HEK293 (cell line): ENCODE measurements at regions of chr2 and their contacts with region 1.

Region 1: GRCh38 chr2:121530212-121530705 is 421 bp upstream of the RNU4ATAC start:
- H3K4me3 ChIP-seq: peak overlapping the region; percentile 78
- H3K27ac ChIP-seq: peak overlapping the region; percentile 100
- H3K4me1 ChIP-seq: peaks cover 17% of the 10 kb centered on the region
- CTCF ChIP-seq: no peak

Region 2: GRCh38 chr2:121400201-121400600 is 130.1 kb before region 1 on chr2:
- CTCF ChIA-PET with region 1: interaction called, 13 read pairs
- POLR2A ChIA-PET with region 1: interaction called, 13 read pairs
- H3K4me3 ChIP-seq: no peak overlapping the region
- H3K27ac ChIP-seq: no peak overlapping the region
- H3K4me1 ChIP-seq: no peaks in the 10 kb centered on the region
- CTCF ChIP-seq: no peak

Region 3: GRCh38 chr2:121454549-121455090 is 75.6 kb before region 1 on chr2:
- CTCF ChIA-PET with region 1: no interaction called
- POLR2A ChIA-PET with region 1: no interaction called
- H3K4me3 ChIP-seq: no peak overlapping the region
- H3K27ac ChIP-seq: no peak overlapping the region
- H3K4me1 ChIP-seq: no peaks in the 10 kb centered on the region
- CTCF ChIP-seq: no peak

Region 4: DNA sequence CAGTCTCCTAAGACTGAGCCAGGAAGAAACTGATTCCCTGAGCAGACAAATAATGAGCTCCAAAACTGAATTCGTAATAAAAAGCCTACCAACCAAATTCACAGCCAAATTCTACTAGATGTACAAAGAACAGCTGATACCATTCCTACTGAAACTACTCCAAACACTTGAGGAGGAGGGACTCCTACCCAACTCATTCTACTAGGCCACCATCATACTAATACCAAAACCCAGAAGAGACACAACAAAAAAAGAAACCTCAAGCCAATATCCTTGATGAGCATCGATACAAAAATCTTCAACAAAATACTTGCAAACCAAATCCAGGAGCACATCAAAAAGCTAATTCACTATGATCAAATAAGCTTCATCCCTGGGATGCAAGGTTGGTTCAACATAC is 20.4 kb after region 1 on chr2:
- CTCF ChIA-PET with region 1: no interaction called
- POLR2A ChIA-PET with region 1: no interaction called
- H3K4me3 ChIP-seq: no peak overlapping the region
- H3K27ac ChIP-seq: no peak overlapping the region
- H3K4me1 ChIP-seq: no peaks in the 10 kb centered on the region
- CTCF ChIP-seq: no peak

Region 5: DNA sequence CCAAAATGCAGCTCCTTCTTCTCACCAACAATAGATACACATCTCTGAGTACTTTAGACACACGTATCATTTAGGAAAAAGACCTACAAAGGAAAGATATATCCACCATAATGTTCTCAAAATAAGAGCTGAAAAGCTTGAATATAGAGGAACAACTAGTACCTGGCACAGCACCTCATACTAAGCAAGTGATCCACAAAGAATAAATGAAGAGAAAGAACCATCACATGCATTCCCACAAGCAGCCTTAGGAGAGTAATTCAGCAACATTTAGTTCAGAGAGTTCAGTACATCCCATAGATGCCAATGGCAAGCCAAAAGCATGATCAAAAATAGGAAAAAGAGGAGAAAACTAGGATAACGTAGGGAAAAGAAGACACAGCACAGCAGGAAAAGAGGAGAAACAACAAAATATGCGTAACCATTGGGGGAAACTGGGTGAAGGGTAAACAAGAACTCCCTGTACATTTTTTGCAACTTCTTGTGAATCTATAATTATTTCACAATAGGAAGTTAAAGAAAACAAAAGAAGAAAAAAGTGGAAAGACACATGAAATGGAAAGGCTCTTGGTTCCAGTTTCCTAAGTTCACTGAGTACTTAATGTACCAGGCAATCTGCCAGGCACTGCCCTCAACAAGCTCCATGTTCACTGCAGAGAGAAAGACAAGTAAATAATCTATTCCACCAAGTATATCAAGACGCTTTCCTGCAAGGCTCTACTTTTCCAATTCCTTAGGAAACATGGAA is 96.7 kb after region 1 on chr2:
- CTCF ChIA-PET with region 1: no interaction called
- POLR2A ChIA-PET with region 1: no interaction called
- H3K4me3 ChIP-seq: no peak overlapping the region
- H3K27ac ChIP-seq: no peak overlapping the region
- H3K4me1 ChIP-seq: no peaks in the 10 kb centered on the region
- CTCF ChIP-seq: no peak

Region 6: GRCh38 chr2:121717529-121717928 is 187.3 kb after region 1 on chr2:
- CTCF ChIA-PET with region 1: interaction called, 17 read pairs
- POLR2A ChIA-PET with region 1: interaction called, 3 read pairs
- H3K4me3 ChIP-seq: no peak overlapping the region
- H3K27ac ChIP-seq: no peak overlapping the region
- H3K4me1 ChIP-seq: no peaks in the 10 kb centered on the region
- CTCF ChIP-seq: no peak